A549 (cell line): ENCODE measurements at regions of chr11 and their contacts with region 1.

Region 1: DNA sequence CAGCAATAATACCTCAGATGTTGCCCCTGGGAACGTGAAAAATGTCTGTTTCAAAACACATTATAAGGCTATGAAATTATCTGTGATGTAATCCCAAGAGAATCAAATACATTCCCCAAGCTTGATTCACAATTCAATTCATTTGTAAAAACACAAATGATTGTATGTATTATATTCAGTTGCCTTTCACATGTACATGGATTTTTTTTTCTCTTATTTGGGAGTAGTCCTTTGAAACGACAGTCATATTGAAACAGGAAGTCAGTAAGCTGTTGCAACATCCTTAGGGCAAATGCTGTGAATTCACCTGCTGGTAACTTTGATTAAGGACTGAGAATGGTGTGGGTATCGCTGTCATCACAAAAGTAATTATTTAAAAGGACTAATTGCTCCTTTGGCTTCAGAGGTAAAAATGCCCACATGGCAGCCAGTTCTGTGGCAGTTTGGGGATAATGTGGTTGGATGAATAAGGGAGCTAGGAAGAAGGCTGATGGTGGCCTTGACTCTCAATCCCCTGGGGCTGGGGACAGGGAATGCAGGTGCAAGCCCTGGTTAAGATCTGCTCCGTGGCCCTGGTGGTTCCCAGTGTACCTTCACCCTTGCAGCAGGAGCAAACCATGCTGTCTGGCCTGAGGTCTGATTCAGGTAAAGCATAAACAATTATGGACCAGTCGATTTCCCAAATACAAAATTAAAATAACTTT is 13.2 kb downstream of the EHF start:
- DNase-seq: peak in 1 of 2 experiments; percentile 60
- ATAC-seq: peak in 1 of 2 experiments; percentile 29; a peak in 4 of 6 replicates
- H3K4me3 ChIP-seq: no peak overlapping the region
- H3K27ac ChIP-seq: peak overlapping the region; percentile 77 to 94
- H3K4me1 ChIP-seq: peaks cover 82% of the 10 kb centered on the region
- CTCF ChIP-seq: no peak
- EP300 ChIP-seq: peak in 1 of 2 experiments; percentile 34; a peak in 1 of 5 replicates
- POLR2A ChIP-seq: no peak
- RAD21 ChIP-seq: no peak; a peak in 1 of 5 replicates

Region 2: GRCh38 chr11:34599406-34599901 is 34.7 kb before region 1 on chr11:
- CTCF ChIA-PET with region 1: interaction called, 10 read pairs
- POLR2A ChIA-PET with region 1: interaction called, 74 read pairs
- DNase-seq: peak; percentile 76 to 88
- ATAC-seq: peak; percentile 44 to 57
- H3K4me3 ChIP-seq: no peak overlapping the region
- H3K27ac ChIP-seq: peak overlapping the region; percentile 98 to 99
- H3K4me1 ChIP-seq: peaks cover 57% of the 10 kb centered on the region
- CTCF ChIP-seq: no peak
- EP300 ChIP-seq: peak; percentile 84 to 96; a peak in 4 of 5 replicates
- POLR2A ChIP-seq: no peak
- RAD21 ChIP-seq: peak in 1 of 2 experiments; percentile 49; a peak in 3 of 5 replicates